Right lobe of liver (tissue), 6 donors: ENCODE measurements at regions of chr1 and their contacts with region 1.

Region 1: GRCh38 chr1:40769815-40770214 is 13.8 kb upstream of the KCNQ4 start:
- DNase-seq: no peak
- ATAC-seq: peak; percentile 37 to 53 (median 42)
- H3K4me3 ChIP-seq: no peak overlapping the region
- H3K27ac ChIP-seq: no peak overlapping the region
- H3K4me1 ChIP-seq: peaks cover 0 to 11% (median 4%) of the 10 kb centered on the region in 4 donors
- H3K27me3 ChIP-seq: no peaks in the 10 kb centered on the region
- CTCF ChIP-seq: peak; percentile 18 to 39 (median 29)
- POLR2A ChIP-seq: no peak

Region 2: DNA sequence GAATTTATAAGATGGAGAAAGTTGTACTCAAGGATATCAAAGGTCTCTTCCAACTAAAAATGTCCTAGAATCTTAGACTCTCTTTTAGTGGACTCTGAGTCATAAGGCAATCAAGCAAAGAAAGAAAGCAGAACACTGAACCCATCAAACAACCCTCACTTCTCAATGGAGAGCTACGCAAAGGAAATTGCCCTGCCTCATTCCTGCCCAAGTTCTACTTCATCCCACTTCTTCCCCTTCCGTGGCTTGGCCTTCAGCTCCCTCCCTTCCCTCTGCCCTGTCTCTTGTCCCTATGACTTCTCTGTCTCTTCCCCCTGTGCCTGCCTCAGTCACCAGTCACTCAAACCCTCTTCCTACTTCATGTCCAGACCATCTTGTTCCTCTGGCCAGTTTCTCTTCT is 162.8 kb before region 1 on chr1:
- intact Hi-C with region 1: loop called in 1 of 2 experiments (anchors 10 kb)
- DNase-seq: peak in 1 of 3 donors; percentile 21
- ATAC-seq: peak in 3 of 4 donors; percentile 30 to 49 (median 47)
- H3K4me3 ChIP-seq: no peak overlapping the region
- H3K27ac ChIP-seq: no peak overlapping the region
- H3K4me1 ChIP-seq: no peaks in the 10 kb centered on the region
- H3K27me3 ChIP-seq: no peaks in the 10 kb centered on the region
- CTCF ChIP-seq: no peak
- POLR2A ChIP-seq: no peak